ENCODE measurements at regions of chr21 and their contacts with region 1.

Region 1: GRCh38 chr21:45129189-45129923 is 55.0 kb downstream of the ADARB1 start:
- DNase-seq: no peak

Region 2: GRCh38 chr21:44949779-44950198 is 179.6 kb before region 1 on chr21:
- intact Hi-C with region 1: loop called (anchors 5 kb)
- DNase-seq: peak; percentile 59 to 92 (median 79)

Region 3: DNA sequence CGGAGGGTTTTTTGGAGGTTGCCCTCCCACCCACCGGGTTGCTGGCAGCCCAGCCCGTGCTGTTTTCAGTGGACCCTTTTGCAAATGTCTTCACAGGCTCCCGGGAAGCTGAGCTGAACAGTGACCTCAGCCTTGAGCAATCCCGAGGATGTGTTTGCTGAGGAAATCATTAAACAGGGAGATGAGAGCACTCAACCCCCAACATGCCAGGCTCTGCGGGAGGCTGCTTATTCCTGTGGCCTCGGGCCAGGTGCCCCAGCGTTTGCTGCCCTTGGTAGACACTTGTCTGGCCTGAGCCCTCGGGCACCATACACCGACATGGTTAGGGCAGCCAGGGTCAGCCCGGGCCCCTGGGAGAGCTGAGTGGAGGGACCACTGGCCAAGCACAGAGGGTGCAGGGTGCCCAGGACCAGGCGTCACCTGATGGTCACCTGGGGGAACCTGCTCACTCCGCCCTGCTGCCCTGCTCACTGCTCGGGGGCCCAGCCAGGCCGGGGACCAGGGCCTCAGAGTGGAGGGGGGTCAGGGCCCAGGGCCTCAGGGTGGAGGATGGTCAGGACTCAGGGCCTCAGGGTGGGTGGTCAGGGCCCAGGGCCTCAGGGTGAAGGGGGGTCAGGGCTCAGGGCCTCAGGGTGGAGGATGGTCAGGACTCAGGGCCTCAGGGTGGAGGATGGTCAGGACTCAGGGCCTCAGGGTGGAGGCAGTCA is 200.9 kb after region 1 on chr21:
- intact Hi-C with region 1: no loop called
- DNase-seq: peak in 1 of 42 donors; percentile 28

Measured in head of caudate nucleus (tissue), 42 donors.